Activated CD4-positive, alpha-beta T cell treated with anti-CD3 and anti-CD28 coated beads for 36 hours (primary cell): ENCODE measurements at regions of chr5 and their contacts with region 1.

Region 1: GRCh38 chr5:77491783-77492652 is at the start of gene WDR41:
- DNase-seq: peak; percentile 93
- ATAC-seq: peak; percentile 91
- H3K4me3 Mint-ChIP-seq: peak within 1 kb of the TSS; percentile 74
- H3K27ac Mint-ChIP-seq: peak within 1 kb of the TSS; percentile 84
- H3K4me1 Mint-ChIP-seq: peaks cover 21% of the 10 kb centered on the region
- H3K27me3 Mint-ChIP-seq: peaks cover 8% of the 10 kb centered on the region
- total RNA-seq, gene WDR41: 24.2 to 25.4 TPM

Region 2: DNA sequence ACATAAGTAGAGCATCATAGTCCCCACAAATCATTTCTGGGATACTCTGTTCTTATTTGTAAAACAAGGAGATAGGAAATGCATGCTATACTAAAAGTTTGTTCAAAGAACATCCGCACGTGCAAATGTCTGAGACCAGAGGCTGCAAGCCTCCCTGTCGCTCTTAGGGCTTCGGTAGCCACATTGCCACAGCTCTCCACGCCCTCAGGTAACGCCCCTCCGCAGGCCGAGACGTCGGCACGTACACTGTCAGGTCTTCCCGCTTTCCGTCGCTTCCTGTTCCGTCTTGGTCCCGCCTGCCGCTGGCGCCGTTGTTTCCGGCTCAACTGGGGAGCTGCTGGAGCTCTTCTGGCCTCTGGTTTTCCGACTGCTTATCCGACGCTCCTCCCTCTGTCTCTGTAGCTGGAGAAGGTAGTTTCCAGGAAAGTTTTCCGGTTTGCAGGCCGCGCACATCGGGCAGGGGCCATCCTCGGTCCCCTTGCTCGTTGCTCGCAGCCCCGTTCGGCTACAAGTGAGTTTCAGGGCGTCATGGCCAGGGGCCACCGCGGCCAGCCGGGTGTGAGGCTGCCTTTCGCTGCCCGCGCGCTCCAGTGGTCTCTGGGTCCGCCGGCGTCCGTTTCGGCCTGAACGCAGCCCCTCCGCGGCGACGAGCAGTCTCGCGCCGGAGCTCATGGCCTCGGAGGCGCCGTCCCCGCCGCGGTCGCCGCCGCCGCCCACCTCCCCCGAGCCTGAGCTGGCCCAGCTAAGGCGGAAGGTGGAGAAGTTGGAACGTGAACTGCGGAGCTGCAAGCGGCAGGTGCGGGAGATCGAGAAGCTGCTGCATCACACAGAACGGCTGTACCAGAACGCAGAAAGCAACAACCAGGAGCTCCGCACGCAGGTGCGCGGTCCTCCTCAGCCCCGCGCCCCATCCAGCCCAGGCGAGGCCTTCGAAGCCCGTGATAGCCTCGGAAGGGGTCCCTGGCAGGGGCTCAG is 461.6 kb before region 1 on chr5 and contains the start of gene AGGF1:
- CTCF ChIA-PET with region 1: no interaction called
- POLR2A ChIA-PET with region 1: no interaction called
- intact Hi-C with region 1: loop called in 1 of 2 experiments (anchors 1 kb)
- DNase-seq: peak; percentile 96
- ATAC-seq: peak; percentile 98
- H3K4me3 Mint-ChIP-seq: peak within 1 kb of the TSS; percentile 87
- H3K27ac Mint-ChIP-seq: peak within 1 kb of the TSS; percentile 94
- H3K4me1 Mint-ChIP-seq: peaks cover 30% of the 10 kb centered on the region
- H3K27me3 Mint-ChIP-seq: no peaks in the 10 kb centered on the region
- total RNA-seq, gene AGGF1: 25.5 to 33.2 TPM

Region 3: DNA sequence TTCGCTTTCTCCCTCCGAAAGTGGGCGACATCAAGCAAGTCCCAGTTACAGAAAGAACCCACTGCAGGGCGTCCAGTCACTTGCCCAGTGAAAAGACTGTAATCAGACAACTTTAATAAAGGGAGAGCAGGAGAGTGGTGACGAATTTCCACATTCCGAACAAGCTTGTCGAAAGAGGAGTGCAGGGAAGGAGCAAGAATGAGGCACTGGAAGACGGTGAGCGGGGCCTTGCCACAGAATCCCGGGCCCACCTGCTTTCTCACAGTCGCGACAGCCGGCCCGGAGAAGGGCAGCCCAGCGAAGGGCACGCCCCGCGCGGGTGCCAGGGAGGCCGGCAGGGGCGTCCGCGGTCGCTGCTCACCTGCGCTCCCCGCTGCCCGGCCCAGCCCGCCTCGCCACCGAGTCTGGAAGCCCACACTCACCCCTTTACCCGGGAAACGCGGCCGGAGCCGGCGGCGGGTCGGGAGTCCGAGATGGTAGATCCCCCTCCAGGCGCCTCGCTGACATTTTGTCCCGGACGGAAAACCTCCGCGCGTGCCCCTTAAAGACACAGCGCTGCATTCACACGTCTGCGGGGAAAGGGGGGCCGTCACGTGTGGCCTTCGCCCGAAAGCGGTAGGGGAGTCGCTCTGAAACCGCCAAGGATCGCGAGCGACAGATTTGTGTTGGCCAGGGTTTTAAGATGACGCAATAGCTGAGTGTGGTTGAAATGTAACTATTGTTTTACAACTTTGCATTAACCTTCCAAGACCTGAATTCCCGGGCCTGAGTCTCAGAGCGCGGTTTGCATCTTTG is 405.1 kb before region 1 on chr5 and contains the start of gene ZBED3:
- CTCF ChIA-PET with region 1: interaction called, 3 read pairs
- POLR2A ChIA-PET with region 1: no interaction called
- intact Hi-C with region 1: loop called (anchors 2 to 5 kb)
- DNase-seq: peak; percentile 73
- ATAC-seq: peak; percentile 76
- H3K4me3 Mint-ChIP-seq: peak within 1 kb of the TSS; percentile 85
- H3K27ac Mint-ChIP-seq: peak within 1 kb of the TSS; percentile 91
- H3K4me1 Mint-ChIP-seq: peaks cover 14% of the 10 kb centered on the region
- H3K27me3 Mint-ChIP-seq: peaks cover 2% of the 10 kb centered on the region
- total RNA-seq, gene ZBED3: 2.2 to 2.9 TPM

Region 4: DNA sequence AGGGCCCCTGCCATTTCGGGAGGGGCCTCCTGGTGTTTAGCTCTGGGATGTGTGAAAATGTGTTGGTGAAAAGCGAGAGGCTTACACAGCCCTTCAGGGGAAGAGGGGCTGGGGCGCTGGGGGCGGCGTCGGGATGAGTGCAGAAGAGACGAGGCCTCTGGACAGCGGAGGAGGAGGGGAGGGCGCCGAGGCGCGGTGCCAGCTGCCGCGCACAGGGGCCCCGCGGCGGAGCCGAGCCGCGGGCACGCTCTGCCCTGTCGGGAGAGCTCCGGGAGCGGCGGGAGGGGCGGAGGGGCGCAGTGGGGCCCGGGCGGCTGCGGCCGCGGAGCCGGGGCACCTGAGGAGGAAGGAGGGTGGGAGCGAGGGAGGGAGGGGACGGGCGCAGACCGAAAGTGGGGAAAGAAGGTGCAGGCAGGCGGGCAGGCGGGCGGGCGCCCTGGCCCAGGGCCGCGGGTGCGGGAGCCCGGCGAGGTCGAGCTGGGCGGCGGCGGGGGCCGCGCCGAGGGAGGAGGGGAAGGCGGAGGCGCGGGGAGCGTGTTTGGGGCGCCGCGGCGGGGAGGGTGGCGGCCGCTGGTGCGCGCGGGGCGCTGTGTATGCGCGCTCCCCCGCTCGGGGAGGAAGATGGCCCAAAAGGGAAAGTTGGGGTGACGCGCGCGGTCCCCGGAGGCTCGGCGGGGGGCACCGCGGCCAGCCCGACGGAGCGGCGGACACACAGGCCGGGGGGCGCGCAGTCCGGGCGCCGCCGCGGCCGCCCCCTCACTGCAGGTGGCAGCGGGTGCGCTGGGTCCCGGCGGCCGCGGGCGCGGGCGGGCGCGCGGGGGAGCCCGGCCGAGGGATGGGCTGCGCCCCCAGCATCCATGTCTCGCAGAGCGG is 281.7 kb before region 1 on chr5 and contains the start of gene PDE8B:
- CTCF ChIA-PET with region 1: interaction called, 7 read pairs
- POLR2A ChIA-PET with region 1: interaction called, 3 read pairs
- intact Hi-C with region 1: loop called (anchors 2 to 10 kb)
- DNase-seq: peak; percentile 32
- ATAC-seq: peak; percentile 55
- H3K4me3 Mint-ChIP-seq: peak within 1 kb of the TSS; percentile 68
- H3K27ac Mint-ChIP-seq: no peak within 1 kb of the TSS
- H3K4me1 Mint-ChIP-seq: peaks cover 10% of the 10 kb centered on the region
- H3K27me3 Mint-ChIP-seq: peaks cover 48% of the 10 kb centered on the region
- total RNA-seq, gene PDE8B: not detected

Region 5: DNA sequence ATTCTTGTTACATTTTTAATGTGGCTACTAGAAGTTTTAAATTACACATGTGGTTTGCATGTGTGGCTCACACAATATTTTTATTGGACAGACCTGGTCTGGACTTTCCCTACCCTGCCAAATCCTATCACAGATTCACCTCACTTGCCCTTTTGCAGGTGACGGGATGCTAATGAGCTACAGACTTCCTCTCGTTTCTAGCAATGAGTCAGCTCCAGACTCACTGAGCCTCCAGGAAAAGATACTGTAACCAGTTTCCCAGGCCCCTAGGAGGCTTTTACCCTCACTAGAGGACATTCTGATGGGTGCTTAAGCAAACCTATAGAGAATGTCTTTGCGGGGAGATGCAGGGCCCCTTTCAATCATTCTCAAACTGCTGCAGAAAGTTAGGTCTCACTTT is 135.3 kb before region 1 on chr5:
- CTCF ChIA-PET with region 1: interaction called, 4 read pairs
- POLR2A ChIA-PET with region 1: no interaction called
- intact Hi-C with region 1: loop called (anchors 1 to 10 kb)
- DNase-seq: peak; percentile 71
- ATAC-seq: peak; percentile 98
- H3K4me3 Mint-ChIP-seq: no peak overlapping the region
- H3K27ac Mint-ChIP-seq: peak overlapping the region; percentile 52
- H3K4me1 Mint-ChIP-seq: peaks cover 16% of the 10 kb centered on the region
- H3K27me3 Mint-ChIP-seq: peaks cover 8% of the 10 kb centered on the region

Region 6: GRCh38 chr5:77775790-77776553 is 284.0 kb after region 1 on chr5 and contains the start of gene TBCA:
- CTCF ChIA-PET with region 1: no interaction called
- POLR2A ChIA-PET with region 1: no interaction called
- intact Hi-C with region 1: loop called in 1 of 2 experiments (anchors 2 kb)
- DNase-seq: peak; percentile 92
- ATAC-seq: peak; percentile 88
- H3K4me3 Mint-ChIP-seq: peak within 1 kb of the TSS; percentile 98
- H3K27ac Mint-ChIP-seq: peak within 1 kb of the TSS; percentile 95
- H3K4me1 Mint-ChIP-seq: peaks cover 52% of the 10 kb centered on the region
- H3K27me3 Mint-ChIP-seq: no peaks in the 10 kb centered on the region
- total RNA-seq, gene TBCA: 195 to 210 TPM